ENCODE measurements at regions of chr7 and their contacts with region 1.

Region 1: GRCh38 chr7:20598459-20599309 is 16.8 kb upstream of the ABCB5 start:
- DNase-seq: no peak
- ATAC-seq: peak; percentile 78 to 91 (median 88)
- H3K4me3 ChIP-seq: no peak overlapping the region
- H3K27ac ChIP-seq: no peak overlapping the region
- H3K4me1 ChIP-seq: no peaks in the 10 kb centered on the region
- H3K27me3 ChIP-seq: no peaks in the 10 kb centered on the region
- CTCF ChIP-seq: peak; percentile 34 to 84 (median 66)

Region 2: DNA sequence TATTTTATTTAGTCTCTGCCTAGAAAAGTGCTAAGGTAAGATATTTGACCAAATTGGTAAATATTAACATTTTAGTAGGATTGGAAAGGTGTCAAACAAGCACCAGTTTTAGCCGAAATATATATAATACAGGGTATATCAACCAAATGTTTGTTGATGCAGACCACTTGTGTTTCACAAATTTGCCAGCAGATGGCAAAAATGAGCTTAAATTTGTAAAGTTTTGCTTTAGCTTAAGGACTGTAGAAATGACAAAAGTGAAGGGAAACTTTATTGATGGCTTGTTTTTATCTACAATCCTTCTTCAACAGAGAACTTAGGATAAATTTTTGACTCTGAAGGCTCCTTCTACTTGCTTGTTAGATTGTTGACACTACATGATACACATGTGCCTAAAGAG is 885.0 kb before region 1 on chr7:
- intact Hi-C with region 1: loop called in 1 of 3 experiments (anchors 10 kb)
- DNase-seq: peak in 1 of 6 donors; percentile 26
- ATAC-seq: no peak
- H3K4me3 ChIP-seq: no peak overlapping the region
- H3K27ac ChIP-seq: no peak overlapping the region
- H3K4me1 ChIP-seq: peaks cover 0 to 6% (median 4%) of the 10 kb centered on the region in 3 donors
- H3K27me3 ChIP-seq: no peaks in the 10 kb centered on the region
- CTCF ChIP-seq: peak; percentile 20 to 37 (median 24)

Region 3: GRCh38 chr7:19747740-19748339 is 850.8 kb before region 1 on chr7:
- intact Hi-C with region 1: loop called in 2 of 3 experiments (anchors 5 to 10 kb)
- DNase-seq: no peak
- ATAC-seq: peak in 3 of 4 donors; percentile 76 to 78 (median 78)
- H3K4me3 ChIP-seq: no peak overlapping the region
- H3K27ac ChIP-seq: no peak overlapping the region
- H3K4me1 ChIP-seq: peaks cover 0 to 4% (median 0%) of the 10 kb centered on the region in 3 donors
- H3K27me3 ChIP-seq: no peaks in the 10 kb centered on the region
- CTCF ChIP-seq: peak; percentile 22 to 52 (median 42)

Region 4: GRCh38 chr7:19754521-19755116 is 844.1 kb before region 1 on chr7:
- intact Hi-C with region 1: loop called in 2 of 3 experiments (anchors 5 to 10 kb)
- DNase-seq: no peak
- ATAC-seq: peak in 2 of 4 donors; percentile 25 to 46
- H3K4me3 ChIP-seq: no peak overlapping the region
- H3K27ac ChIP-seq: no peak overlapping the region
- H3K4me1 ChIP-seq: no peaks in the 10 kb centered on the region
- H3K27me3 ChIP-seq: no peaks in the 10 kb centered on the region
- CTCF ChIP-seq: peak in 3 of 4 donors; percentile 50 to 73 (median 54)